GM13977 (cell line): ENCODE measurements at regions of chr1 and their contacts with region 1.

Region 1: DNA sequence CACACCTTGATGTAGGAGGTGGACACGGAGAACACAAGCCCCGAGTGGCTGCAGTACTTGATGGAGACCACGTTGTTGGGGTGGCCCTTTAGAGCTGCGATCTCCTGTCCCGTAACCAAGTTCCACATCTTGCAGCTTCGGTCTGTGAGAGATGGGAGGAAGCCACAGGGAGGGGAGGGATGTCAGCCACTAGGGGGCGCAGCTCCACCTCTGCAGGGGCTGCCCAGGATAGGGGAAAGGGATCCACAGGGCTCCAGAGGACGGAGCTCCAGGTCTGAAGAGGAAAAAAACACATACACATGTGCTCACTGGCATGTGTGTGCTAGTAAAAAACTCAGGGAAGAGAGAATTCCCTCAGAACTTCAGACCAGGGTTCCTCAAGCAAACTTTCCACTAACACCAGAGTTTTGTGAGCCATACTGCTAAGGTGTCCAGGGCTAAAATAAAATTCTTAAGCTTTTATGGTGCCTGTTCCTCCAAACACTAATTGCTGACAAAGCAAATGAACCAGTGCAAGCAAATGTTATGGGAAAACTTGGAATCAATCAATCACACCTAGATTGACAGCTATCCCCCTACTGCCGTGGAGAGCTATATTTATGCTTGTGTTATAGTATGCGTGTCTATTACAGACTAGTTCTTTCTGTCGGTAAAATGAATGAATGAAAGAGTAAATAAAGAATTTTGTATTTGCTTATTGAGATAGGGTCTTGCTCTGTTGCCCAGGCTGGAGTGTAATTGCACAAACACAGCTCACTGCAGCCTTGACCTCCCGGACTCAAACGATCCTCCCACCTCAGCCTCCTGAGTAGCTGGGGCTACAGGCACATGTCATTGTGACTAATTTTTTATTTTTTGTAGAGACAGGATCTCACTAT is 43.7 kb downstream of the KIF21B start:
- DNase-seq: peak; percentile 77
- CTCF ChIP-seq: peak; percentile 75

Region 2: GRCh38 chr1:200811704-200812103 is 168.1 kb before region 1 on chr1:
- in situ Hi-C with region 1: no loop called
- DNase-seq: no peak
- CTCF ChIP-seq: no peak

Region 3: GRCh38 chr1:201042779-201043461 is 63.1 kb after region 1 on chr1:
- in situ Hi-C with region 1: loop called (anchors 5 kb)
- DNase-seq: peak; percentile 80
- CTCF ChIP-seq: peak; percentile 93